Right ventricle myocardium inferior (tissue), 1 donor: ENCODE measurements at regions of chr1 and their contacts with region 1.

Region 1: DNA sequence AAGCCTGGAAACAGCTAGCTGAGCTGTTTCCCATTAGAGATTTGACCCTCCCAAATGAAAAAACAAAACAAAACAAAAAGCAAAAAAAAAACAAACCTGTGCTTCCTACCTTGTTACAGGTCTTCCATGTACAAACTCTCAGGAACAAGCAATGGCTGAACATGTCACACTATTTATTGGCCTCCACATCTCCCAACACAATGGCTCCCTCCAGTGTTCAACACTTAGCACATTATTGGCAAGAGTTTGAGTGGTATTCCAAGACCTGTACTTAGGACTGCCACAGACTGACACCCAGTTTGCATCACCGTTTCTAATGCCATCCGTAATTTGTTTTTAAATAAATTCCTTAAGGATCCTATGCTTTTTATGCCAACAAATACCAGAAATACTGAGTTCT is 195.0 kb upstream of the OLFM3 start:
- DNase-seq: no peak
- ATAC-seq: peak; percentile 48

Region 2: DNA sequence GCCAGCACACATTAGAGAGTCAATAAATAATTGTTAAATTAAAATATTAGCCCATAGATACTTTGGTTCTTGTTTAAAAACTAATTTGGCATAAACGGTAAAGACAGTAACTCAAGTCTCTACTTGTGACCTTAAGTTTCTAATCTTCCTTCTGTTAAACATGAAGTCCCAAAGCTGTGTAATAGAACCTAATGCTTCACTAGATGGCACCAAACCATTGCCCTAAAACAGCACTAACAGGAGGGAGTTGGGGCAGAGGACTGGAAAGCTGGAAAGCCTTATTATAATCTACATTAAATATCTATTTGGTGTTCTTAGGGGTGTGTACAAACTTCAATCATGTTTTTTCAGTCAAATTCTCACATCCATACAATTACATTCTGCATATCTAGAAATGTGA is 371.7 kb before region 1 on chr1:
- intact Hi-C with region 1: loop called (anchors 1 kb)
- DNase-seq: no peak
- ATAC-seq: peak; percentile 54